ENCODE measurements at regions of chr1 and their contacts with region 1.

Region 1: GRCh38 chr1:201732351-201732750 is 96.6 kb upstream of the IPO9 start:
- DNase-seq: no peak
- H3K4me3 ChIP-seq: no peak overlapping the region
- H3K27ac ChIP-seq: no peak overlapping the region
- H3K4me1 ChIP-seq: no peaks in the 10 kb centered on the region
- H3K27me3 ChIP-seq: no peaks in the 10 kb centered on the region
- CTCF ChIP-seq: no peak
- POLR2A ChIP-seq: no peak

Region 2: GRCh38 chr1:201810466-201811216 is 78.3 kb after region 1 on chr1:
- intact Hi-C with region 1: loop called (anchors 2 kb)
- DNase-seq: no peak
- H3K4me3 ChIP-seq: no peak overlapping the region
- H3K27ac ChIP-seq: no peak overlapping the region
- H3K4me1 ChIP-seq: no peaks in the 10 kb centered on the region
- H3K27me3 ChIP-seq: no peaks in the 10 kb centered on the region
- CTCF ChIP-seq: no peak
- POLR2A ChIP-seq: no peak

Measured in breast epithelium (tissue), 4 donors.